Psoas muscle (tissue), 8 donors: ENCODE measurements at regions of chr4 and their contacts with region 1.

Region 1: GRCh38 chr4:13399257-13399656 is 84.9 kb downstream of the RAB28 start:
- DNase-seq: no peak
- ATAC-seq: peak; percentile 37 to 72 (median 52)
- H3K4me3 ChIP-seq: no peak overlapping the region
- H3K27ac ChIP-seq: no peak overlapping the region
- H3K4me1 ChIP-seq: peaks cover 12% of the 10 kb centered on the region
- H3K27me3 ChIP-seq: no peaks in the 10 kb centered on the region
- CTCF ChIP-seq: no peak

Region 2: DNA sequence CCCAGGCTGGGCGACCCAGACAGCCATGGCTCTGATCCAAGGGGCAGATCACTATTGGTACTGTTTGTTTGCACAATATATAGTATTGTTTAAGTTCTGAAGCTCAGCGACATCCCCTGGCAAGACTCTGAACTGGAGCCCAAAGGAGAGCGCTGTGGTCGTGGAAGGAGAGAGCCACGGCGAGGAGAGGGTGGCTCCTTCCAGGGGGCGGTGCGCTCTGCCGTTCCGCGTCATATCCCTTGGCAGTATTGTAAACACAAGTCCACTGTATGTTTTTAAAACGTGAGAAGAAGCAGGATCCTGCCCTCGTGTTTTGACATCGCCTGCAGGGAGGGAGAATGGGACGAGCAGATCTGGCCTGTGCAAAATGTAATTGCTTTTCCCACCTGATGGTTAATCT is 100.6 kb before region 1 on chr4:
- intact Hi-C with region 1: no loop called
- DNase-seq: no peak
- ATAC-seq: no peak
- H3K4me3 ChIP-seq: no peak overlapping the region
- H3K27ac ChIP-seq: no peak overlapping the region
- H3K4me1 ChIP-seq: no peaks in the 10 kb centered on the region
- H3K27me3 ChIP-seq: no peaks in the 10 kb centered on the region
- CTCF ChIP-seq: no peak

Region 3: DNA sequence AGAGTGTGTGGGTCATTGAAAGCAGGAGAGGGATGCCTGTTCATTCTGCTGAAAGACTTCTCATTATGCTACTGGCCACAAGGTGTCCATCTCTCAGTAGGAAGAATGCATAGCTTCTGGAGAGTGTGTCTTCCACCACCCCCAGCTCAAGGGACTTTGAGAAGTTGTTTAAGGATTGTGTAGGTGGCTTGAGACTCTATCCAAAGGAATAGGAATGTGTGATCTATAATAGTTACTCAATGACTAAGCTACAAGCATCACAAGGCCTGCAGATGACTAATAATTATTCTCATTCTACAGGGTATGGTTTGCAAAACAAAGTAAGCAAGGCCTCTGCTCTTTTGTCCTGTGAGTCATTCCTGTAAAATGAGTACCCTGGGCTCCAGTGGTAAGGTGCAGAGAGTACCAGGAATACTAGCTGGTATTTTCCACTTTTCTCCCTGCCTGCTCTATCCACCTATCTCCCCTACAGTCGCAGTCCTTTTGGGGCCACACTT is 508.0 kb after region 1 on chr4:
- intact Hi-C with region 1: no loop called
- DNase-seq: no peak
- ATAC-seq: peak in 1 of 4 donors; percentile 66
- H3K4me3 ChIP-seq: no peak overlapping the region
- H3K27ac ChIP-seq: no peak overlapping the region
- H3K4me1 ChIP-seq: no peaks in the 10 kb centered on the region
- H3K27me3 ChIP-seq: no peaks in the 10 kb centered on the region
- CTCF ChIP-seq: no peak

Region 4: GRCh38 chr4:14180983-14181601 is 781.8 kb after region 1 on chr4:
- intact Hi-C with region 1: loop called in 1 of 2 experiments (anchors 5 kb)
- DNase-seq: no peak
- ATAC-seq: no peak
- H3K4me3 ChIP-seq: no peak overlapping the region
- H3K27ac ChIP-seq: no peak overlapping the region
- H3K4me1 ChIP-seq: no peaks in the 10 kb centered on the region
- H3K27me3 ChIP-seq: no peaks in the 10 kb centered on the region
- CTCF ChIP-seq: no peak